K562 (cell line): ENCODE measurements at regions of chr7 and their contacts with region 1.

Region 1: DNA sequence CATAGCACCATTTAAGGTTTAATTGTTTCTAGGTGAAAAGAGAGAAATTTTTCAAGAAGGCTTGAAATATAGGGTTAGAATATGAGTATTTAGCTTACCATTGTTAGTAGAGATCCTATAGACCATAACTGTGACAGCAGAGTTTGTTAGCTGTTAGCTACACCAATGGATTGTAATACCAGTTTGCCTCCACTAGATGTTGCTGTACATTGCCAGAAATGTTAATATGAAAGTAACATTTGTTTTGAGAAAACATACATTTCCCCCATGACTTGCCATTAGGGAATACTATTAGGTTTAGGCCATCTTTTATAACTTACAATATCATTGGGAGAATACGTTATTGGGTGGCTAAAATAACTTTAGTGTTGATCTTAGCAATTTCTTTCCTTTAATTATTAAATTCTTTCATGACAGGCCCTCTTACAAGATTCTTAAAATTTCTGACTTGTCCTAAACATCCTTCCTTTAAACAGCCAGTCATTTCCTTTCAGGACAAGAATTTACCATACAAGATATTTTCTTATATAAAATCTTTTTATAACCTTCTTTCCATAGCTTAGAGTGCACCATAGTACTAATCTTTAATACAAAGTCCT is 39.5 kb downstream of the ZNF117 start:
- DNase-seq: peak; percentile 27 to 71 (median 44)
- ATAC-seq: peak; percentile 87
- H3K4me3 ChIP-seq: no peak overlapping the region
- H3K27ac ChIP-seq: no peak overlapping the region
- H3K4me1 ChIP-seq: peaks cover 2 to 14% of the 10 kb centered on the region in 2 experiments; a peak in 4 of 5 replicates
- H3K27me3 ChIP-seq: no peaks in the 10 kb centered on the region
- CTCF ChIP-seq: peak; percentile 55 to 80 (median 63); a peak in 5 of 6 replicates
- EP300 ChIP-seq: no peak
- POLR2A ChIP-seq: no peak
- RAD21 ChIP-seq: peak; percentile 62 to 94

Region 2: DNA sequence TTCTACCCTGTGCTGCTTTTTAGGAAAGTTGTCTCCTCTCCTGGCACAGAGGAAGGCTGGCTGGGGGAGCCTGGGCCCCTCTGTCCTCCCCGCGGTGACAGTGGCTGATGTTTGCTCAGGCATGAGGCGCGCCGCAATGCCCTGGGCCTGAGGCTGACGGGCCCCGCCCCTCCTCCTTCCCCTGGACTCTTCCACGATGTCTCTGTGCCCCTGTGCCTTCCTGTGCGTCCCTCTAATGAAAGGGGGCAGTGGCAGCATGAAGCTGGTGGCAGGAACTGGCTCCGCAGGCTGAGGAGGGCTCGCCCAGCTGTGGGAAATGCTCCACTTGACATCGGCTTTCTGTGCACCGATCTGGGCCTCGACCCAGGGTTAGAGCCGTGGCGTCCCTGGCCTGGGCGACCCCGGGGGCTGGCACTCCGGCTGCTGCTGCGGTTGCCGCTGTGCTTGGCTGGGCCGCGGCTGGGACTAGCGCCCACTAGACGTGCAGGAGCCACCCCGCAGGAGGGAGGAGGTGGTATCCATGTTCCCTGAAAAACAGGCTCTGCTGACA is 456.4 kb before region 1 on chr7:
- CTCF ChIA-PET with region 1: no interaction called
- POLR2A ChIA-PET with region 1: no interaction called
- in situ Hi-C with region 1: no loop called
- intact Hi-C with region 1: no loop called
- DNase-seq: no peak
- ATAC-seq: peak; percentile 23; the same call in 1 of the 3 replicates
- H3K4me3 ChIP-seq: no peak overlapping the region
- H3K27ac ChIP-seq: no peak overlapping the region
- H3K4me1 ChIP-seq: peaks cover 0 to 6% of the 10 kb centered on the region in 2 experiments; a peak in 2 of 5 replicates
- H3K27me3 ChIP-seq: no peaks in the 10 kb centered on the region
- CTCF ChIP-seq: no peak
- EP300 ChIP-seq: no peak
- POLR2A ChIP-seq: no peak
- RAD21 ChIP-seq: no peak

Region 3: GRCh38 chr7:64636386-64636785 is 315.0 kb before region 1 on chr7:
- CTCF ChIA-PET with region 1: no interaction called
- POLR2A ChIA-PET with region 1: no interaction called
- in situ Hi-C with region 1: no loop called
- intact Hi-C with region 1: loop called (anchors 5 kb)
- DNase-seq: peak in 3 of 4 experiments; percentile 8 to 16 (median 12)
- ATAC-seq: no peak; the same call in 2 of the 3 replicates
- H3K4me3 ChIP-seq: no peak overlapping the region
- H3K27ac ChIP-seq: no peak overlapping the region
- H3K4me1 ChIP-seq: no peaks in the 10 kb centered on the region
- H3K27me3 ChIP-seq: no peaks in the 10 kb centered on the region
- CTCF ChIP-seq: peak; percentile 17 to 64 (median 47); a peak in 5 of 6 replicates
- EP300 ChIP-seq: no peak
- POLR2A ChIP-seq: no peak
- RAD21 ChIP-seq: peak in 1 of 2 experiments; percentile 27; a peak in 1 of 4 replicates

Region 4: DNA sequence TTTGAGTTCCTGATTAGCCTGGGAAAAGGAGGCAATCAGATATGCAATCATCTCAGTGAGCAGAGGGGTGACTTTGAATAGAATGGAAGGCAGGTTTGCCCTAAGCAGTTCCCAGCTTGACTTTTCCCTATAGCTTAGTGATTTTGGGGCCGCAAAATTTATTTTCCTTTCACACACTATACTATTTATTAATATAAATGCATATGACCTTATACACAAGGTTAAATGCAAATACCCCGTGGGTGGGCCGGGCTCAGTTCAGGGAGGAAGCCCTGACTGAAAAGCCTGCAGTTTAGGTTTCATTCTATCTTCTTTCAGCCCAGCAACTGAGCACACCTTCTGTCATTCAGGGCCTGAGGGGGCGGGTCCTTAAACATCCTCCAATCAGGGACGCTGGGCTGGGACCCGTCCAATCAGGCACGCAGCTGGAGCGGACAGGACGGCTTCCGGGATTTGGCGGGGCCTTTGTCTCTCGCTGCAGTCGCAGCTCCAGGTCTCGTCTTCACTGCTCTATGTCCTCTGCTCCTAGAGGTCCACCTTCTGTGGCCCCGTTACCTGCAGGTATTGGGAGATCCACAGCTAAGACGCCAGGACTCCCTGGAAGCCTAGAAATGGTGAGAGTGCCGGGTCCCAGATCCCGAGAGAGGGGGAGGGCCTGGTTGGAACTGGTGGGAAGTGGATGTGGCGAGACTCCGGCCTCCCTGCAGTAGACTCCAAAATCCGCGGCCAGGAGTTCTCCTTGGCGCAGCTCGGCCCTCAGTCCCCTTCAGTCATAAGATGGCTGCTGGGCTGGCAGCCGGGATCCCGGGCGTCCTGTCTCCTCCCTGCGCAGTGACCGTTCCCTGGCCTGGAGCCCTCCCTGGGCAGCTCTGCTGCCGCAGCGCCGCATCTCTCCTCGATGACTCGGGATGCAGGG is 48.3 kb before region 1 on chr7 and contains the start of gene ZNF273:
- CTCF ChIA-PET with region 1: no interaction called
- POLR2A ChIA-PET with region 1: no interaction called
- in situ Hi-C with region 1: no loop called
- intact Hi-C with region 1: loop called (anchors 5 kb)
- DNase-seq: peak; percentile 91 to 98 (median 94)
- ATAC-seq: peak; percentile 92
- H3K4me3 ChIP-seq: peak within 1 kb of the TSS; percentile 95
- H3K27ac ChIP-seq: peak within 1 kb of the TSS; percentile 92
- H3K4me1 ChIP-seq: peaks cover 15 to 28% of the 10 kb centered on the region in 2 experiments; a peak in 4 of 5 replicates
- H3K27me3 ChIP-seq: no peaks in the 10 kb centered on the region; a peak in 1 of 5 replicates
- CTCF ChIP-seq: 0 out of 6 replicates have a peak, but pooled peaks of 1 of the 3 experiments have one; percentile 4
- EP300 ChIP-seq: no peak; the same call in 1 of the 2 replicates
- POLR2A ChIP-seq: peak; percentile 95
- RAD21 ChIP-seq: no peak
- polyA plus RNA-seq, gene ZNF273: 20.2 to 37.0 TPM

Region 5: DNA sequence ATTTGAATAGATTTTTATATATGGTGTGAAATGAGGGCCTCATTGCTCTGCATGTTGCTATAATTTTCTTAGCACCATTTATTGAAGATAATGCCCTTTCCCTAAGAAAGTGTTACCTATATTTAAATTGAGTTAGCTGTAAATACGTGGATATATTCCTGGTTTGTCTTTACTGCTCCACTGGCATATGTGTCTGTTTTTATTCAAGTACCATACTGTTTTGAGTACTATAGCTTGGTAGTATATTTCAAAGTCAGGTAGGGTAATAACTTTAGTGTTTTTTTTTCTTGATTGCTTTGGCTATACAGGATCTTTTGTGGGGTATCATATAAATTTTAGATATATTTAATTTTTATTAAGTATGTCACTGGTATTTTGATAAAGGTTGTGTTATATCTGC is 16.9 kb before region 1 on chr7:
- CTCF ChIA-PET with region 1: no interaction called
- POLR2A ChIA-PET with region 1: no interaction called
- in situ Hi-C with region 1: no loop called
- intact Hi-C with region 1: no loop called
- DNase-seq: no peak
- ATAC-seq: no peak
- H3K4me3 ChIP-seq: no peak overlapping the region
- H3K27ac ChIP-seq: no peak overlapping the region
- H3K4me1 ChIP-seq: no peaks in the 10 kb centered on the region
- H3K27me3 ChIP-seq: no peaks in the 10 kb centered on the region
- CTCF ChIP-seq: no peak
- EP300 ChIP-seq: no peak
- POLR2A ChIP-seq: no peak
- RAD21 ChIP-seq: no peak

Region 6: DNA sequence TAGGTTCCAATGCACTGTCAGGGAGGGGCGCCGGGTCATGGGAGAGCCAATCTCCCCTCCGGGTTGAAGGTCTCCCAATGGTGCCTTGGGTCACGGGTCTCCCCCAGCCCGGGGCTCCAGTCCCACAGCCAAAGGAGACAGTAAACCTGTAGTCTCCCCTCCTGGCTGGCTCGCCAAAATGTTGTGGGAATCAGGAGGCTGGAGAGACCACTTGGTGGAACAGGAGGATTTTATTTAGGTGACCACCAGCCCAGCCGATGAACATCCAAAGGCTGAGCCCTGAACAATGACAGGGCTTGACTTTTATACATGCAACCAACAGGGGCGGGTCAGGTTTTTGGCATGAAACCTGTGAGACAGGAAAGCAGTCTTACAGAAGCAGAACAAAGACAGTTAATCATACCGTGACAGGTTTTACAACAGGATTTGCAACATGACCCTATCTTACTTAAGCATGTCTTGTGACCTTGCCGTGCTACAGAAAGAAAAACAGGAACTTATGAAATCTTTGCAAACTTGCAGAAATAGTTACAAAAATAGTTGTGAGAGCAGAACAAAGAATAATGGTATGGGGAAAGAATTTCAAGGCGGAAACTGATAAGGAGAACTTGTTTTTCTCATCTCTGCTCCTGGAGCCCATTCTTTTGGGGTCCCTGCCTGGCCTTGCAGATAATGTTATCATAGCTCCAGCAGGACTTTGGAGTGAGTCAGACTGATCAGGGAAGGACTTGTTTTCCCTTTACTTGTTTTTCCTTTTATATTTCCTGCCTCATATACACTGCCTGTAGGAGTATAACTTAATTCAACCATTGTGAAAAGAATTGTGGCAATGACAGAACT is 48.0 kb after region 1 on chr7:
- CTCF ChIA-PET with region 1: no interaction called
- POLR2A ChIA-PET with region 1: no interaction called
- in situ Hi-C with region 1: no loop called
- intact Hi-C with region 1: loop called (anchors 5 kb)
- DNase-seq: peak; percentile 71 to 96 (median 82)
- ATAC-seq: peak; percentile 80
- H3K4me3 ChIP-seq: peak overlapping the region; percentile 3; the same call in 1 of the 2 replicates
- H3K27ac ChIP-seq: peak overlapping the region; percentile 96
- H3K4me1 ChIP-seq: peaks cover 23 to 41% of the 10 kb centered on the region in 2 experiments; a peak in 4 of 5 replicates
- H3K27me3 ChIP-seq: no peaks in the 10 kb centered on the region
- CTCF ChIP-seq: no peak; a peak in 1 of 6 replicates
- EP300 ChIP-seq: peak; percentile 99
- POLR2A ChIP-seq: no peak
- RAD21 ChIP-seq: peak; percentile 41 to 45

Region 7: GRCh38 chr7:65216459-65216858 is 265.1 kb after region 1 on chr7:
- CTCF ChIA-PET with region 1: no interaction called
- POLR2A ChIA-PET with region 1: no interaction called
- in situ Hi-C with region 1: loop called (anchors 5 kb)
- intact Hi-C with region 1: loop called (anchors 5 kb)
- DNase-seq: peak in 2 of 4 experiments; percentile 52 to 83
- ATAC-seq: peak; percentile 93
- H3K4me3 ChIP-seq: no peak overlapping the region
- H3K27ac ChIP-seq: no peak overlapping the region
- H3K4me1 ChIP-seq: no peaks in the 10 kb centered on the region
- H3K27me3 ChIP-seq: no peaks in the 10 kb centered on the region
- CTCF ChIP-seq: peak; percentile 83 to 93 (median 84)
- EP300 ChIP-seq: no peak
- POLR2A ChIP-seq: no peak
- RAD21 ChIP-seq: peak; percentile 64 to 88

Region 8: DNA sequence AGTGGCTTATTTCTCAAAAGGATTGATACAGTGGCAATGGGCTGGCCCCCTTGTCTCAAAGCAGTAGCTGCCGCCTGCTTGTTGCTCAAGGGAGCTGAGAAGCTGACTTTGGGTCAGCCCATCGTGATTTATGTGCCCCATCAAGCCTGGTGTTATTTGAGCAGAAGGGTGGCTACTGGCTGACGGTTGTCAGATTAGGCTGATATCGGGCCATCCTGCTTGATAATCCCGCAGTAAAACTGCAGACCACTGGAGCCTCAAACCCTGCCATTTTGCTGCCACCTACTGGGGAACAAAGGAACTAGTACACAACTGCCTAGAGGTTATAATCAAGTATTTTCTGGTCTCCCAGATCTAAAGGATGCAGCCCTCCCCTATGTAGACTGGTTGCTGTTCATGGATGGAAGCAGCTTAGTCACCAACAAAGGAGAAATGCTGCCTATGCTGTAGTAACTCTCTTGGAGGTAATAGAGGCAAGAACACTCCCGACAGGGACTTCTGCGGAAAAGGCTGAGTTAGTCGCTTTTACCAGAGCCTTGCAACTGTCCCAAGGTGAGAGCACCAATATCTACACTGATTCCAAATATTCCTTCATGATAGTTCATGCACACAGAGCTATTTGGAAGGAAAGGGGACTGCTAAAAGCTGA is 356.4 kb after region 1 on chr7:
- CTCF ChIA-PET with region 1: interaction called, 4 read pairs
- POLR2A ChIA-PET with region 1: no interaction called
- in situ Hi-C with region 1: no loop called
- intact Hi-C with region 1: loop called (anchors 2 kb)
- DNase-seq: peak; percentile 70 to 82 (median 74)
- ATAC-seq: peak; percentile 96
- H3K4me3 ChIP-seq: no peak overlapping the region
- H3K27ac ChIP-seq: no peak overlapping the region
- H3K4me1 ChIP-seq: peaks cover 0 to 2% of the 10 kb centered on the region in 2 experiments; a peak in 1 of 5 replicates
- H3K27me3 ChIP-seq: no peaks in the 10 kb centered on the region
- CTCF ChIP-seq: peak; percentile 85 to 95 (median 91)
- EP300 ChIP-seq: no peak
- POLR2A ChIP-seq: no peak
- RAD21 ChIP-seq: peak; percentile 89 to 92

Region 9: DNA sequence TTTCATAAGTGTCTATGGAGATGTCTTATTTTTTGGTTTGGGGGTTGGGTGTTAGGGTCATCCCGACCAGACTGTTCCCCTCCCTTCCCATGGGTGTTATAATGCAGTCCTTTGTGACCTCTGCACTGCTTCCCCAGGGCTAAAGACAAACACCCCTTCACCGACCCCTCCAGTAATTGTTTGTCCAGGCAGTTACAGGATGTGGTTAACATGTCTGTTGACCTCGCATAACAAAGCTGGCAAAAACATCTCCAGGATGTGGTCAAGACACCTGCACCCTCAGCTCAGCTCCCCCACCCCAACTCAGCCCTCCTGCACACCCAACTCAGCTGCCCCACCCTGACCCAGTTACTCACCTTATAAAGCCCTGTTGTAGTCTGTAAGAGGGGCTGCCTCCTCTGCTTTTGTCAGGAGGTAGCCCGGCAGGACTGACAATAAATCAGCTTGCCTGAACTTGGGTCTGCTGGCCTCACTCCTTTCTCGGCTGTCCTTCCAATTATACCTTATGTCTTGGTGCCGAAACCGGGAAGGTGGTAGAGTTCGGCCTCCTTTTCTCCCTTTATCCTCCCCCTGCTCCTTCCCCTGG is 524.5 kb after region 1 on chr7:
- CTCF ChIA-PET with region 1: no interaction called
- POLR2A ChIA-PET with region 1: no interaction called
- in situ Hi-C with region 1: no loop called
- intact Hi-C with region 1: loop called (anchors 10 kb)
- DNase-seq: no peak
- ATAC-seq: no peak; the same call in none of the 3 replicates
- H3K4me3 ChIP-seq: no peak overlapping the region
- H3K27ac ChIP-seq: no peak overlapping the region
- H3K4me1 ChIP-seq: no peaks in the 10 kb centered on the region; a peak in 1 of 5 replicates
- H3K27me3 ChIP-seq: peaks cover 2 to 17% of the 10 kb centered on the region in 2 experiments; a peak in 2 of 5 replicates
- CTCF ChIP-seq: no peak
- EP300 ChIP-seq: no peak
- POLR2A ChIP-seq: no peak
- RAD21 ChIP-seq: no peak